Left lung (tissue), 14 donors: ENCODE measurements at regions of chr1 and their contacts with region 1.

Region 1: DNA sequence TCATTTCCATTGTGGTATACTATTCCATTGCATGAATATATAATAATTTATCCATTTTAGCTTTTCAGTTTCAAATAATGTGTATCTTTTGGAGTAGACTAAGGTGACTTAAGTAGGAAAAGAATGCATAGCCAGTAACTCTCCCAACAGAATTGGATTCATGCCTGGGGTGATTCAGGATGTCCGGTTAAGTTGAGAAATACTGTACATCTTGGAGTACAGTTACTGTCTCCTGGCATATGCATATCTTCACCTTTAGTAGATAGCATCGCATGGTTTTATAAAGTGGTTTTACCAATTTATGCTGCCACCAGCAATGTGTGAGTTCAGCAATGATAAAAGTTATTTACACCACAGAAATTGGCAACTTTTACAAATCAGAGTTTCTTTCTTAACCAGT is 18.6 kb upstream of the SLC6A9 start:
- DNase-seq: no peak
- ATAC-seq: peak; percentile 4
- H3K4me3 ChIP-seq: no peak overlapping the region
- H3K27ac ChIP-seq: no peak overlapping the region
- H3K4me1 ChIP-seq: peaks cover 0 to 13% of the 10 kb centered on the region in 2 donors
- H3K27me3 ChIP-seq: no peaks in the 10 kb centered on the region
- CTCF ChIP-seq: no peak

Region 2: GRCh38 chr1:44008259-44008658 is 41.6 kb before region 1 on chr1:
- intact Hi-C with region 1: loop called in 1 of 2 experiments (anchors 5 kb)
- DNase-seq: peak in 1 of 4 donors; percentile 74
- ATAC-seq: no peak
- H3K4me3 ChIP-seq: no peak overlapping the region
- H3K27ac ChIP-seq: no peak overlapping the region
- H3K4me1 ChIP-seq: peaks cover 0 to 3% of the 10 kb centered on the region in 2 donors
- H3K27me3 ChIP-seq: no peaks in the 10 kb centered on the region
- CTCF ChIP-seq: no peak